ENCODE measurements at regions of chr14 and their contacts with region 1.

Region 1: GRCh38 chr14:74084277-74085046 is at the starts of genes ALDH6A1 and LIN52:
- DNase-seq: peak; percentile 100
- H3K4me3 Mint-ChIP-seq: peak within 1 kb of the TSS; percentile 99
- H3K27ac Mint-ChIP-seq: peak within 1 kb of the TSS; percentile 95
- H3K4me1 Mint-ChIP-seq: peaks cover 38% of the 10 kb centered on the region
- H3K27me3 Mint-ChIP-seq: no peaks in the 10 kb centered on the region
- total RNA-seq, gene ALDH6A1: 24.0 to 25.3 TPM
- total RNA-seq, gene LIN52: 10.7 to 13.6 TPM

Region 2: GRCh38 chr14:73136387-73137225 is 947.9 kb before region 1 on chr14 and contains the start of gene PSEN1:
- CTCF ChIA-PET with region 1: no interaction called
- intact Hi-C with region 1: loop called (anchors 10 kb)
- DNase-seq: peak; percentile 98
- H3K4me3 Mint-ChIP-seq: peak within 1 kb of the TSS; percentile 98
- H3K27ac Mint-ChIP-seq: peak within 1 kb of the TSS; percentile 97
- H3K4me1 Mint-ChIP-seq: peaks cover 26% of the 10 kb centered on the region
- H3K27me3 Mint-ChIP-seq: no peaks in the 10 kb centered on the region
- total RNA-seq, gene PSEN1: 24.5 to 26.0 TPM

Region 3: DNA sequence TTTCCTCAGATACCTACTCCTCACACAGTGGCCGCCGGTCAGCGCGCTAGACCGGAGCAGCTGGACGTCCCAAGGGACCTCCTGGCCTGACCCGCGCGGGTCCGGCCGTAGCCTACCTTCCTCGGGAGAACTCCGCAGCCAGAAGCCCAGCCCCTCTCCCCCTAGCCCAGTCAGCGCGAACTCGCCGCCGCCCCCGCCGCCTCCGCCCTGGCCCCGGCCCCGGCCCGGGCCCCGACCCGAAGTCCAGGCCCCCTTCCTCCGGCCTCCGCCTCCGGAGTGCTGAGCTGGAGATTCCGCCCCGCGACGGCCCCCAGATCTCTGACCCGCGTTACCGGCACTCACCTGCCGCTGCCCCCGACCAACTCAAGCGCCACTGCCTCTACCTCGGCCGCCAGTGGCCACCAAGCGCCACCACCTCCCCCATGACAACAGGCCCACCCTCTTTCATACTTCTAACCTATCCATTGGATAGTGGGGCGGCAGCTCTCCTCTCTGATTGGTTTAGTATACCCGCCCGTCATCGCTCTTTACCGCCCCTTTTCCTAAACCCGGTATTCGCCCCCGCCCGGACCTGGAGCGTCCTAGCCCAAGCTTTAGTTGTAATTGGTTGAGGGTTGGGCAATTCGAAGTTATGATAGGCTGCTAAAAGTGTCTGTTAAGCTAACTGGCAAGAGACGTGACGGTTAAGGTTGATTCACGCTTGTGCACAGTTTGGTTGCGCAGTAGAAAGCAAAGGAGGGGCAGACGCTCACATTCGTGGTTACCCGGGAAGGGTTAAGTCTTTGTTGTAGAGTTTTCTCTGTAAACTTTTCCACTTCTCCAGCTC is 626.1 kb before region 1 on chr14 and contains the start of gene NUMB:
- CTCF ChIA-PET with region 1: no interaction called
- intact Hi-C with region 1: loop called (anchors 1 kb)
- DNase-seq: peak; percentile 99
- H3K4me3 Mint-ChIP-seq: peak within 1 kb of the TSS; percentile 92
- H3K27ac Mint-ChIP-seq: peak within 1 kb of the TSS; percentile 79
- H3K4me1 Mint-ChIP-seq: peaks cover 42% of the 10 kb centered on the region
- H3K27me3 Mint-ChIP-seq: no peaks in the 10 kb centered on the region
- total RNA-seq, gene NUMB: 24.2 to 26.4 TPM

Region 4: GRCh38 chr14:73851644-73852382 is 232.6 kb before region 1 on chr14 and contains the start of gene PTGR2:
- CTCF ChIA-PET with region 1: no interaction called
- intact Hi-C with region 1: loop called (anchors 2 kb)
- DNase-seq: peak; percentile 91
- H3K4me3 Mint-ChIP-seq: peak within 1 kb of the TSS; percentile 92
- H3K27ac Mint-ChIP-seq: peak within 1 kb of the TSS; percentile 96
- H3K4me1 Mint-ChIP-seq: peaks cover 20% of the 10 kb centered on the region
- H3K27me3 Mint-ChIP-seq: no peaks in the 10 kb centered on the region
- total RNA-seq, gene PTGR2: 10.7 to 14.1 TPM

Region 5: GRCh38 chr14:73886449-73887317 is 197.8 kb before region 1 on chr14 and contains the start of gene ZNF410:
- CTCF ChIA-PET with region 1: no interaction called
- intact Hi-C with region 1: loop called (anchors 1 kb)
- DNase-seq: peak; percentile 95
- H3K4me3 Mint-ChIP-seq: peak within 1 kb of the TSS; percentile 88
- H3K27ac Mint-ChIP-seq: peak within 1 kb of the TSS; percentile 94
- H3K4me1 Mint-ChIP-seq: peaks cover 46% of the 10 kb centered on the region
- H3K27me3 Mint-ChIP-seq: no peaks in the 10 kb centered on the region
- total RNA-seq, gene ZNF410: 51.0 to 56.8 TPM

Region 6: GRCh38 chr14:74018586-74019407 is 65.7 kb before region 1 on chr14 and contains the starts of genes BBOF1 and ENTPD5:
- CTCF ChIA-PET with region 1: interaction called, 3 read pairs
- intact Hi-C with region 1: loop called (anchors 1 kb)
- DNase-seq: peak; percentile 80
- H3K4me3 Mint-ChIP-seq: peak within 1 kb of the TSS; percentile 86
- H3K27ac Mint-ChIP-seq: peak within 1 kb of the TSS; percentile 90
- H3K4me1 Mint-ChIP-seq: peaks cover 13% of the 10 kb centered on the region
- H3K27me3 Mint-ChIP-seq: no peaks in the 10 kb centered on the region
- total RNA-seq, gene BBOF1: 1.3 to 1.7 TPM
- total RNA-seq, gene ENTPD5: 7.3 to 9.6 TPM

Region 7: GRCh38 chr14:74257078-74257989 is 172.9 kb after region 1 on chr14:
- CTCF ChIA-PET with region 1: no interaction called
- intact Hi-C with region 1: loop called (anchors 1 kb)
- DNase-seq: peak; percentile 63
- H3K4me3 Mint-ChIP-seq: peak overlapping the region; percentile 72
- H3K27ac Mint-ChIP-seq: no peak overlapping the region
- H3K4me1 Mint-ChIP-seq: peaks cover 7% of the 10 kb centered on the region
- H3K27me3 Mint-ChIP-seq: no peaks in the 10 kb centered on the region

Measured in activated naive CD4-positive, alpha-beta T cell treated with anti-CD3 and anti-CD28 coated beads for 36 hours (primary cell).